ENCODE measurements at regions of chr16 and their contacts with region 1.

Region 1: GRCh38 chr16:56729735-56730662 is at the start of gene NUP93:
- DNase-seq: peak; percentile 81 to 85 (median 85)
- H3K4me3 ChIP-seq: peak within 1 kb of the TSS; percentile 80 to 95 (median 91)
- H3K4me3 Mint-ChIP-seq: peak within 1 kb of the TSS; percentile 89 to 95
- H3K27ac ChIP-seq: peak within 1 kb of the TSS; percentile 65 to 92
- H3K27ac Mint-ChIP-seq: peak within 1 kb of the TSS; percentile 84 to 94 (median 88)
- H3K4me1 ChIP-seq: peaks cover 19 to 37% of the 10 kb centered on the region in 2 donors
- H3K4me1 Mint-ChIP-seq: peaks cover 20% of the 10 kb centered on the region
- H3K27me3 ChIP-seq: no peaks in the 10 kb centered on the region
- H3K27me3 Mint-ChIP-seq: peaks cover 0 to 2% (median 2%) of the 10 kb centered on the region in 3 donors
- CTCF ChIP-seq: no peak
- polyA plus RNA-seq, gene NUP93: 46.6 to 77.7 (median 59.4) TPM

Region 2: DNA sequence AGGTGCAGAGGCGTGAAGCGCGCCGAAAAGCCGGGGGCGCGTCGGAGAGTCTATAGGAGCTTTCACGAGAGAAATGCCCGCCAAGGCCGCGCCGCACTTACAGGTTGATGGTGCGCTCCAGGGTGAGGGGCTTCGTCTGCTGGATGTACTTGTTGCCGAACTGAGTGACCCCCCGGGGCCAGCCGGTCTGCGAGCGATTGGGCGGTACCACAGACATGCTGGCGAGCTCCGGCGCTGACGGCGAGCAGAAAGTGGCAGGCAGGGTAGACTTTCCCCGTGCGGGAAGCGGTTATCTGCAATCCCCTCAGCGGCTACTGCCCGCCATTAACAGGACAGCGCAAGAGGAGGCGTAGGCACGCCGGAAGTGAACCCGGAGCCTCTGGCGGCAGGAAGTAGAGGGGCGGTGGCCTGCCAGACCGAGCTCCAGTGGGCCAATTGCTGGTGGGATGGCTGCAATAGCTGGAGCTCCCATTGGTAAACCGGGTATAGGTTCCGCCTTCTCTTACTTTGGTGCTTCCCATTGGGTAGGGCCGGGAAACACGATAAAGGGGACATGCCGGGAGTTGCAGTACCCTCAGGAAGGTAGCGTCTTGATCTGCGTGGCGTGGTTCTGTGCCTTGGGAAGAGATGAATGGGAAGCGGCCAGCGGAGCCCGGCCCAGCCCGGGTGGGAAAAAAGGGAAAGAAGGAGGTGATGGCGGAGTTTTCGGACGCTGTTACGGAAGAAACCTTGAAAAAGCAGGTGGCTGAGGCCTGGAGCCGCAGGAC is 278.8 kb before region 1 on chr16 and contains the starts of genes NUDT21 and OGFOD1:
- intact Hi-C with region 1: loop called in 1 of 2 experiments (anchors 2 kb)
- DNase-seq: peak; percentile 94 to 98 (median 96)
- H3K4me3 ChIP-seq: peak within 1 kb of the TSS; percentile 74 to 87 (median 87)
- H3K4me3 Mint-ChIP-seq: peak within 1 kb of the TSS; percentile 99 to 100
- H3K27ac ChIP-seq: peak within 1 kb of the TSS; percentile 61 to 82
- H3K27ac Mint-ChIP-seq: peak within 1 kb of the TSS; percentile 90 to 99 (median 93)
- H3K4me1 ChIP-seq: peaks cover 20 to 26% of the 10 kb centered on the region in 2 donors
- H3K4me1 Mint-ChIP-seq: peaks cover 29% of the 10 kb centered on the region
- H3K27me3 ChIP-seq: no peaks in the 10 kb centered on the region
- H3K27me3 Mint-ChIP-seq: no peaks in the 10 kb centered on the region
- CTCF ChIP-seq: no peak
- polyA plus RNA-seq, gene NUDT21: 33.0 to 65.0 (median 55.9) TPM
- polyA plus RNA-seq, gene OGFOD1: 8.2 to 37.9 (median 23.4) TPM